ENCODE measurements at regions of chr4 and their contacts with region 1.

Region 1: DNA sequence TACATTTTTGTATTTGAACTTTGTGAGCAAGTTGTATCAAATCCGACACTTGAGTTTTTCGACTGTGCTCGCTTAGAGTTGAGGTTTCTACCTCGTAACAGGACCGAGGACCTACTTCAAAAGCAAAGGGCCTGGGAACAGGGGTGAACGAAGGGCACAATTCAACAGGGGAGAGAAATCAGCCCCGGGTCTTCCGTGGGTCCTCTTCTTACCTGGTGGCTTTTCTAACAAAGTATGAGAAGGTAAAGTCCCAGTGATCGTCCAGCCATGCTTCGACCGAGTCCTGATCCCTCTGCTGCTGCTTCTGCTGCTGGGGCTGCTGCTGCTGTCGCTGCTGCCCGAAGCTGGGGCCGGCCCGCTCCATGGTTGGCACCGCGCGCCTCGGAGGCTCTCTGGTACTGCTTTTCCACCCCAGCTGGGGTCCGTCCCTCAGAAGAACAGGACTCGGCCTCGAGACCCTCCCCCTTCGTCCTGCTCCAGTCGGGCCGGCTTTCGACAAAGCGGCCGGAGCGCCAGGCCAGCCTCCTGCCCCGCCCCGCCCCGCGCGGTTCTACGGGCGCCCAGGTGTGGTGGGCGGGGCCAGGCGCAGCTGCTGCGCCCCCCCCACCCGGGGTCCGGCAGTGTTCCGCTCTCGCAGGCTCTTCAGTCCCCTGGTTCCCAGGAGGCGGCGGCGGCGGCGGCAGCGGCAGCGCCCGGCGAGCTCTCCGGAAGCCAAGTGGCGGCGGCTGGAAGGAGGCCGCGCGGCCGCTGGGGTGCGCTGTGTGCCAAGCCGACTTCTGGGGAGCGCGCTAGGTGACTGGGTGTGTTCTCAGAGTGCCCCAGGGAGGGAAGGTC is at the start of gene PDE5A:
- DNase-seq: no peak
- H3K4me3 ChIP-seq: peak within 1 kb of the TSS; percentile 74
- H3K27me3 ChIP-seq: no peaks in the 10 kb centered on the region
- CTCF ChIP-seq: peak; percentile 72
- polyA plus RNA-seq, gene PDE5A: 69.0 and 82.6 TPM in 2 replicates

Region 2: DNA sequence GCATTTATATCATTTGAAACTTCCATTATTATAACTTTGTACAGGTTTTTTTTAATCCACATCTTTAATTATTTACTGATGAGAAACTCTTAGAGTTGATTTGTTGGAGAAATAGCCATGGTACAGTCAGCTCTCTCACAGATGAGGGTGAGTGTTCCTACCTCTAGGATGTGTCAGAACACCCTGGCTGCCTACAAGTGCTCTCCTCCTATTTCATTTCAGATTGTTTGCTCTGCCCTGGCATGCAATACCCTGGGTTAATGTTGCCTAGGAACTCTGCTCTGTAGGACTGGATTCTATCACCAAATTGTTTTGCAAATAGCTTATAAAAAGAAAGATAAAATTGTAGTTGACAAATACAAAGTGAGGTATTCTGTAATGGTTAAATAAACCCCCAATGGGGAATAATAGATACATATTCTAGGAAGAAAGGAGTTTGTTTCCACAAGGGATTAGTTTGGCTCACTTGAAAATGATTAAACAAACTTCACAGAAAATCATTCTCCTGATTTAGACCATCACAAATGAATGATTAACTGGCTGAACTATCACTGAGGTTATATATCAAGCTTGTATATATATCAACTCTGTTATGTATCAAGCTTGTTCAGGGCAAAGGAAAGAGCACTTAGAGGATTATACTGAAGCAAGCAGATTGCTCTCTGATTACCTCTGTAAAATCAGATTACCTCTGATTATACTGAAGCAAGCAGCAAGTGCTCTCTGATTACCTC is 149.9 kb before region 1 on chr4:
- CTCF ChIA-PET with region 1: no interaction called
- POLR2A ChIA-PET with region 1: no interaction called
- DNase-seq: no peak
- H3K4me3 ChIP-seq: no peak overlapping the region
- H3K27me3 ChIP-seq: no peaks in the 10 kb centered on the region
- CTCF ChIP-seq: no peak

Region 3: GRCh38 chr4:119615068-119615719 is 13.3 kb before region 1 on chr4:
- CTCF ChIA-PET with region 1: interaction called, 11 read pairs
- POLR2A ChIA-PET with region 1: no interaction called
- DNase-seq: no peak
- H3K4me3 ChIP-seq: no peak overlapping the region
- H3K27me3 ChIP-seq: no peaks in the 10 kb centered on the region
- CTCF ChIP-seq: no peak

Region 4: DNA sequence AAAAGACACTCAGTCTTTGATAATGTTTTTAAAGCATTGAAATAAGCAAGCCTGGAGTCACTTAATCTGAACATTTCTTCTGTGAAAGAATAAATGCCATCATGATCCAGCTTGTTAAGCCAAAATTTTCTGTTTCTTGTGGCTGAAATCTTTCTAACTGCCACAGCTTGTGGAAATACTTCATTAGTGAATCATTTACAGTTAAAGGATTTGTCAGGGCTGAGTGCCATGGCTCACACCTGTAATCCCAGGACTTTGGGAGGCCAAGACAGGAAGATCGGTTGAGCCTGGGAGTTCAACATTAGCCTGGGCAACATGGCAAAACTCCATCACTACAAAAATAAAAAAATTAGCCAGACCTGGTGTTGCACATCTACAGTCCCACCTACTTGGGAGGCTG is 93.4 kb after region 1 on chr4:
- CTCF ChIA-PET with region 1: interaction called, 10 read pairs
- POLR2A ChIA-PET with region 1: no interaction called
- DNase-seq: no peak
- H3K4me3 ChIP-seq: no peak overlapping the region
- H3K27me3 ChIP-seq: no peaks in the 10 kb centered on the region
- CTCF ChIP-seq: no peak

Region 5: DNA sequence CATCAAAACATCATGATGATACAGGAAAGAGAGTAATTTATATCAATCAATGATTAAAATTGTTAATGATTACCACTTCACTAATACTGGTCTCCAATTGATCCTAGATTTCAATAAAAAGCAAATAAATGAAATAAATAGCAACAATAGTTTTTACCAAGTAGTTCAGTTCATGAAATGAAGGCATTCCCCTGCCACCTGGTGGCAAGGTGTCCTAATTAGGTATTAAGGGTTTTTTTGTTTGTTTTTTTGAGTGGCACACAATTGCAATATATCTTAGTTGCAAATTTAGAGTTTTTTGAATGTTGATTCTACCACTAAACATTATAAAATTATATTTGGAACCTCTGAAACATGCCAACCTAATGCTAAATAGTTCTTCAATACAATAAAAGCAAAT is 157.4 kb after region 1 on chr4:
- CTCF ChIA-PET with region 1: interaction called, 30 read pairs
- POLR2A ChIA-PET with region 1: no interaction called
- DNase-seq: no peak
- H3K4me3 ChIP-seq: no peak overlapping the region
- H3K27me3 ChIP-seq: no peaks in the 10 kb centered on the region
- CTCF ChIP-seq: peak; percentile 25; the same call in 1 of the 2 replicates

Region 6: GRCh38 chr4:120056246-120056645 is 427.7 kb after region 1 on chr4:
- CTCF ChIA-PET with region 1: interaction called, 64 read pairs
- POLR2A ChIA-PET with region 1: no interaction called
- DNase-seq: peak; percentile 9
- H3K4me3 ChIP-seq: no peak overlapping the region
- H3K27me3 ChIP-seq: no peaks in the 10 kb centered on the region
- CTCF ChIP-seq: peak; percentile 40